ENCODE measurements at regions of chrX and their contacts with region 1.

Region 1: GRCh38 chrX:144791298-144791697 is 456.0 kb upstream of the SPANXN1 start:
- DNase-seq: peak; percentile 21
- H3K4me3 Mint-ChIP-seq: no peak overlapping the region
- H3K27ac Mint-ChIP-seq: peak overlapping the region; percentile 89
- H3K4me1 Mint-ChIP-seq: peaks cover 16% of the 10 kb centered on the region
- H3K27me3 Mint-ChIP-seq: no peaks in the 10 kb centered on the region
- CTCF ChIP-seq: no peak

Region 2: GRCh38 chrX:144637731-144638130 is 153.6 kb before region 1 on chrX:
- CTCF ChIA-PET with region 1: interaction called, 3 read pairs
- intact Hi-C with region 1: loop called (anchors 1 kb)
- DNase-seq: no peak
- H3K4me3 Mint-ChIP-seq: no peak overlapping the region
- H3K27ac Mint-ChIP-seq: no peak overlapping the region
- H3K4me1 Mint-ChIP-seq: peaks cover 21% of the 10 kb centered on the region
- H3K27me3 Mint-ChIP-seq: no peaks in the 10 kb centered on the region
- CTCF ChIP-seq: no peak

Region 3: GRCh38 chrX:144896323-144896722 is 105.0 kb after region 1 on chrX:
- CTCF ChIA-PET with region 1: no interaction called
- intact Hi-C with region 1: loop called (anchors 10 kb)
- DNase-seq: no peak
- H3K4me3 Mint-ChIP-seq: no peak overlapping the region
- H3K27ac Mint-ChIP-seq: no peak overlapping the region
- H3K4me1 Mint-ChIP-seq: no peaks in the 10 kb centered on the region
- H3K27me3 Mint-ChIP-seq: no peaks in the 10 kb centered on the region
- CTCF ChIP-seq: no peak

Measured in Calu3 (cell line).